Endothelial cell of umbilical vein (primary cell): ENCODE measurements at regions of chr2 and their contacts with region 1.

Region 1: DNA sequence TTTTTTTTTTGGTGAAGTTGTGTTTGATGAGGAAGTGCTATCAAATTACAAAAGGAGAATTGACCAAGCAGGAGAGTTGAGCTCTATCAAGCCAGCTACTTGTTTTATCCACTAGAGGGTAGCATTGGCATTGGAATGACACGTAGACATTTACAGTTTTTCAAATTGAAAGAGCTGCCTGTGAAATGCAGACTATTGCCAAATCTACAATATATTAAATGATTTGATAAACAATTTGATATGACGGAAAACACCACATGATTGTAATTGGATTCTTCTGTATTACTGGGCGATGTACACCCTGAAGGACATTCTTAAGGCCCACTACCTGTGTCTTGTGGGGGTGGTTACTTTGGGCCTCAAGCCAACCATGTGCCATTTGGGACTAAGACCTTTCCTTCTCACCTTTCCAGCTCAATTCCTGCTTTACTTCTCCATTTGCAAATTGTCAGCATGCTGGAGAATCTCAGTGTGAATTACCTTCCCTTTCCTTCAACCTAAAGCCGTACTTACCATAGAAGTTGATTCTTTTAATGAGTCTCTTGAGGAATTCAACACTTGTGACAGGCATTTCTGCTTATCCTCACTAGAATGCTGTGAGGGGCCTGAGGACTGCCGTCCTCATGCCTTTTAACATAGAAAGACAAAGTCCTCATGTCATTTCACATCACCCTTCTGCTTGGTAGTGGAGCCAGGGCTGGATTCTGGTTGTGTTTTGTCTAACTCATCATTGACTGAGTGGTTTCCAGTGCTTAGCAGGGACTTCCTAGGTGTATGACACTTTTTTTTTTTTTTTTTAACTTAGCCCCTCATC is 134.8 kb upstream of the THUMPD2 start:
- DNase-seq: peak; percentile 71
- H3K4me3 ChIP-seq: no peak overlapping the region
- H3K27ac ChIP-seq: no peak overlapping the region
- H3K4me1 ChIP-seq: no peaks in the 10 kb centered on the region
- H3K27me3 ChIP-seq: no peaks in the 10 kb centered on the region
- CTCF ChIP-seq: peak; percentile 42 to 67
- POLR2A ChIP-seq: no peak

Region 2: DNA sequence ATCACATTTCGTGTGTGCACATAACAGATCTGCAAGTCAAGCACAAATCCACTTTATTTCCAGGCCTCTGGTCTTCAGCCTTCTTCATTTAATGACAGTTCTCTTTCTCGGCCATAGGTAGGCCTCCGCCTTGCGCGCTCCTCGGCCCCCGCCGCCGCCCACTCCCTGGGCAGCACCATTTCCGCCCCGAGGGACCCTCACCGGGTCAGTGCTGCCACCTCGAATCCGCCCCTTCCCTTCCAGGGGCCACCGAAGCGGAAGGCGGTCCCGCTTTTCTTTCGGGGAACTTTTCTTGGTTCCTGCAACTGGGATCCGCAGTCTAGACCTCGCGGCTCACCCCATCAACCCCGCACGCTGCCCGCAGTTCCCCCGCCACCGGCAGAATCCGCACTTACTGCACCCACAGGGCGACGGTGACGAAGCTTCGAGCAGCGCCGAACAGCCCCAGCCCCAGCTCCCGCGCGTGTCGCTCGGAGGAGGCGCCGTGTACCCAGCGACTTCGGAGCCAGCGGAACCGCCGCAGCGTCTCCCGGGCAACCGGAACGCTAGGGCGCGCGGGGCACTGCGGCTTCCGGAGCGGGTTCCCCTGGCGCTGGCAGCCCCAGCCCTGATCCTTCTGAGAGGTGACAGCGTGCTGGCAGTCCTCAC is 670.3 kb before region 1 on chr2 and contains the start of gene CDKL4:
- CTCF ChIA-PET with region 1: no interaction called
- POLR2A ChIA-PET with region 1: no interaction called
- dilution Hi-C with region 1: no loop called
- intact Hi-C with region 1: no loop called
- DNase-seq: no peak
- H3K4me3 ChIP-seq: peak within 1 kb of the TSS in 2 of 3 experiments; percentile 10 to 27
- H3K27ac ChIP-seq: no peak within 1 kb of the TSS
- H3K4me1 ChIP-seq: peaks cover 5% of the 10 kb centered on the region
- H3K27me3 ChIP-seq: no peaks in the 10 kb centered on the region
- CTCF ChIP-seq: no peak
- POLR2A ChIP-seq: no peak
- total RNA-seq, gene CDKL4: 0.75 and 1.2 TPM in 2 replicates

Region 3: DNA sequence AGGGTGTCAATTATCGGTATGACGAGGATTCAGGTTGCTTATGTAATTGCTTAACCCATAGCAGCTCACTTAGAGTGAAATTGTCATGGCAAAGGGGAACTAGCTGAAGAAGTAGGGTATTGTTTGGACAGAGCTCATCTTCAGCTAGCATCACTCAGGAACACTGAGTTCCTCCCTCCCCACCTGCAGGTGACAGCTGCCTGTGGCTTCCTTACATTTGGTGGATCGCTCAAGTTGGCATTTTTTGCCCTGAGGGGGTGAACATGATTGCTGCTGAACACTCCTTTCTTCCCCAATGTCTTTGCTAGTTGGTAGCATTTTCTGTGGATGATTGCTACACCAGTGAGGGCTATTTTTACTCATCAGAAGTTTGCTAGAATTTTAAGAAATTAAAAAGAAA is 48.1 kb before region 1 on chr2:
- CTCF ChIA-PET with region 1: no interaction called
- POLR2A ChIA-PET with region 1: no interaction called
- dilution Hi-C with region 1: no loop called
- intact Hi-C with region 1: no loop called
- DNase-seq: no peak
- H3K4me3 ChIP-seq: no peak overlapping the region
- H3K27ac ChIP-seq: no peak overlapping the region
- H3K4me1 ChIP-seq: no peaks in the 10 kb centered on the region
- H3K27me3 ChIP-seq: no peaks in the 10 kb centered on the region
- CTCF ChIP-seq: no peak
- POLR2A ChIP-seq: no peak

Region 4: DNA sequence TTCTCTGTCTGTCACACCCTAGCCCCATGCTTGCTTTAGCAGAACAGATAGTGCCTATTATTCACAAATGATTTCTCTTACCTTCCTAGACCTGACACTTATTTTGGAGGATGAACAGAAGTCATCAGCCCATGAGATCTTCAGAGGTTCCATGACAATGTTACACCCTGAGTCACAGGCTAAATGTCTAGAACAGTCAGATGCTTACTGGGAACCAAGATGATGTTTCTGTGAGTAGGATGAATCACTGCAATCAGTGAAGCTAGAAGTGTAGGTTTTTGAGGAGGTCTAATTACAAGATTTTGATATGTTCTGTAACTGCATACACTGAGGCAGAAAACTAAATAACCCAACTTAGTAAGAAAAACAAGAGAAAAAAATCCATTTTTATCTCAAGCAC is 11.8 kb before region 1 on chr2:
- CTCF ChIA-PET with region 1: interaction called, 10 read pairs
- POLR2A ChIA-PET with region 1: no interaction called
- dilution Hi-C with region 1: no loop called
- intact Hi-C with region 1: no loop called
- DNase-seq: no peak
- H3K4me3 ChIP-seq: no peak overlapping the region
- H3K27ac ChIP-seq: no peak overlapping the region
- H3K4me1 ChIP-seq: peaks cover 4% of the 10 kb centered on the region
- H3K27me3 ChIP-seq: peaks cover 1 to 5% of the 10 kb centered on the region in 2 experiments
- CTCF ChIP-seq: no peak
- POLR2A ChIP-seq: no peak

Region 5: GRCh38 chr2:40049781-40050180 is 135.9 kb after region 1 on chr2:
- CTCF ChIA-PET with region 1: no interaction called
- POLR2A ChIA-PET with region 1: no interaction called
- dilution Hi-C with region 1: no loop called
- intact Hi-C with region 1: no loop called
- DNase-seq: no peak
- H3K4me3 ChIP-seq: no peak overlapping the region
- H3K27ac ChIP-seq: no peak overlapping the region
- H3K4me1 ChIP-seq: no peaks in the 10 kb centered on the region
- H3K27me3 ChIP-seq: peaks cover 2% of the 10 kb centered on the region in 2 experiments
- CTCF ChIP-seq: no peak
- POLR2A ChIP-seq: no peak

Region 6: GRCh38 chr2:40244675-40245074 is 330.8 kb after region 1 on chr2:
- CTCF ChIA-PET with region 1: interaction called, 44 read pairs
- POLR2A ChIA-PET with region 1: no interaction called
- dilution Hi-C with region 1: no loop called
- intact Hi-C with region 1: loop called (anchors 2 kb)
- DNase-seq: peak; percentile 71
- H3K4me3 ChIP-seq: no peak overlapping the region
- H3K27ac ChIP-seq: no peak overlapping the region
- H3K4me1 ChIP-seq: peaks cover 5% of the 10 kb centered on the region
- H3K27me3 ChIP-seq: no peaks in the 10 kb centered on the region
- CTCF ChIP-seq: peak; percentile 47 to 64
- POLR2A ChIP-seq: no peak

Region 7: DNA sequence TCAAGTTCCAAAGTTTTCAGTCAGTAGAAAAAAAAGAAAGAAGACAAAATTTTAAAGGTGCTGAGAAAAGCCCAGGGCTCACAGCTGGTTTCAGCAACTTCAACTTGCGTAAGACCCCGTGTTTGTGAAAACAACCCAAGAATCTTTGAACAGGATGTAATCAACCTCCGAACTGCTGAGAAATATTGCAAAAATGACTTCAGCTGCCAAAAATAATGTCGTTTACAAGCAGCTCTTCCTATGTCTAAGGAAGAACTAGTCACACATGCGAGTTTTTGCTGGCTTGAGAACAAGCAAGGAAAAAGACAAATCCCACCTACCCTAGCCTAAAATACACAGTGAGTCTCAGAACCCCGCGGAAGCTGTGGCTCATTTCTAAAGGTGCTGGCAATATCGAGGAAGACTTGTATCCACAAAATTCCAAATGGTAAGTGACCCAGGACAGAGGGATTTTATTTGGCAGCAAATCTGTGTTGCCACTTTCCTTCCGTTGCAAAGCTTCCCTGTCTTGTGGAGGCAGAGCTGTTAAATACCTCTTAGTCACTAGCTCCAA is 597.9 kb after region 1 on chr2:
- CTCF ChIA-PET with region 1: interaction called, 12 read pairs
- POLR2A ChIA-PET with region 1: no interaction called
- dilution Hi-C with region 1: no loop called
- intact Hi-C with region 1: no loop called
- DNase-seq: peak; percentile 87
- H3K4me3 ChIP-seq: peak overlapping the region in 1 of 3 experiments; percentile 34
- H3K27ac ChIP-seq: peak overlapping the region; percentile 68
- H3K4me1 ChIP-seq: peaks cover 16% of the 10 kb centered on the region
- H3K27me3 ChIP-seq: no peaks in the 10 kb centered on the region
- CTCF ChIP-seq: no peak
- POLR2A ChIP-seq: no peak

Region 8: DNA sequence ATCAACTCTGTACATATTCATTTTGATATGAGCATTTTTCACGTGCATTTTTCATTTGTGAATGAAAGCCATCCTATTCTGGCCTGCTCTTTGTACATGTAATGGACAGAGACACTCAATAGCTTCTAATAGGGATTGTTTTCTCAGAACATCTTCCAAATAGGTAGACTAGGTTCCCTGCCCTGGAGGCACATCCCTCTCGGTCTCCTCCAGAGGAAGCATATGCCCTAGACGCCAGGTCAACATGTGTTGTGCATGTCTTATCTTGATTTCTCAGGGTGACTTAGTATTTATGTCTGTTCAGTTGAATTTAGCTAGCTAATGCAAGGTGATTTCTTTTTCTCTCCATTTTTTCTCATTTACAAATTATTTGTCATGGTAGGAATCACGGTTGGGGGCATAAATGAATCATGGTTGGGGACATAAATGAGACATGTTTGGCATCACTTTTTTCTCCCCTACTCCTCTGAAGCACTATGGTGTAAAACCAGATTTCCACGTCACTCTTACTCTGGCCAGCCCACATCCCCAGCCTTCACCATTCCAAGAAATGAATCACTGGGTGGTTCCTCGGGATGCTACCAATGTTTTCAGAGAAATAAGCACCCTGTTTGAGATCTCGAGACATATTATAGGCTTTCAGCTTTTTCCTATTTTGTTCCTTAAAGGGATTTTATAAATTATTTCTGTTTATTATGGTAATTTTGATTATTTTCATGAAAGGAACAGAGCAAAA is 692.8 kb after region 1 on chr2:
- CTCF ChIA-PET with region 1: no interaction called
- POLR2A ChIA-PET with region 1: no interaction called
- dilution Hi-C with region 1: no loop called
- intact Hi-C with region 1: no loop called
- DNase-seq: no peak
- H3K4me3 ChIP-seq: no peak overlapping the region
- H3K27ac ChIP-seq: no peak overlapping the region
- H3K4me1 ChIP-seq: no peaks in the 10 kb centered on the region
- H3K27me3 ChIP-seq: no peaks in the 10 kb centered on the region
- CTCF ChIP-seq: no peak
- POLR2A ChIP-seq: no peak

Region 9: DNA sequence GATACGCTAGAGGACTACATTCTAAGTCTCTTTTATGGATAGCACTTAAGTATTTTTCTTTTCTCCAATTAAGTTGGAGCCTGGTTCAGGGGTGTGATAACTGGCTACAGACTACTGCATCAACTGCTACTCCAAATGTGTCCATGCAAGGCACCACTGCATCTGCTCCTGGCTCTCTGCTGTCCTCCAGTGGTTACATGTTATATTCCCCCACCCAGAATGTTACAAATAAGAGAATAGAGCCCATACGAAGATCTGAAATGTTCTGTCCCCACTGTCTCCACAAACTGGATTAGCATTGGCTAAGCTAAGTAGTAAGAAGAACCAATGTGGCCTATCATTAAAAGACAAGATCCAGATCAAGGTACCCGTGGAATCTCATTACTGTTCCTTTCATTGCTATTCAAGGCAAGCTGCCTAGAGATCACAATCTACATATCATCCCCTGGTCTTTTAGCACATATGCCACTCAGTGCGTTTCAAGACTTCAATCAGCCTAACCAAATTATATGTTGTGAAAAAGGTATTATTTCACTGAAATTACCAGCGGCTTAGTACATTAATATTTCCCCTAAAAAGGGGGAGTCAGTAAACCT is 846.3 kb after region 1 on chr2:
- CTCF ChIA-PET with region 1: interaction called, 36 read pairs
- POLR2A ChIA-PET with region 1: no interaction called
- dilution Hi-C with region 1: no loop called
- intact Hi-C with region 1: loop called (anchors 1 kb)
- DNase-seq: peak; percentile 45
- H3K4me3 ChIP-seq: no peak overlapping the region
- H3K27ac ChIP-seq: no peak overlapping the region
- H3K4me1 ChIP-seq: no peaks in the 10 kb centered on the region
- H3K27me3 ChIP-seq: no peaks in the 10 kb centered on the region
- CTCF ChIP-seq: peak; percentile 48 to 49
- POLR2A ChIP-seq: no peak

Region 10: DNA sequence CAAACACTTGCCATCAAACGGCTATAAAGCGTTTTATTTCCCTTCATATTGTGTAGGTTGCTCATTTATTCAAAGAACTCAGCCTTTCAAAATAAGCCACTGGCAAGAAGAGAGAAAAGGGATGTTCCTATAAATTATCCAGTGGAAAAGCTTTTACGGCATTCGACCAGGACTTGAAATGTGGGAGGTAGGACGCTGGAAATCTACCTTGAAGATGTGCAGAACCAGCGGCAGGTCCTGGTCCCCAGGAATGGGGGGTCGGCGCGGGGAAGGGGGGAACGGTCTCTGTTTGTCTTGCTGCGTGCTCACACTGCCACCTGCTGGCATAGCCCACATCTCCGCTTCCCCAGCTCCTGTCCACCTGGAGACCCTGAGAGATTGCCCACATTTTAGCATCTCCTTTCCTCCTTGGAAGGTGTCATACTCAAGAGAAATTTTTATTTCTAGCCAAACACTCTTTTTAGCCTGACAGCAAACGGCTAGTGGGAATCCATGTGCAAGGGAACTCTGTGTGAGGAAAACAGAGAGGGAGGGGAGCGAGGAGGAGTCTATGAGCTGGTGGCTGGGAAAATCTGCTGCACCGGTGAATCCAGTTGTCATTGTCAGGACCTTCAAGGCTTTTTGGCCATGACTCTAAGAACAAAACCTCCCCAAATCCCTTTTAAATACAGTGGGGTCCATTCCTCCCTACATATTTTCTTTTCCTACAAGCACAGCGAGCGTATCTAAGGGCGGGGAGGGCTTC is 1785.0 kb after region 1 on chr2:
- CTCF ChIA-PET with region 1: interaction called, 114 read pairs
- POLR2A ChIA-PET with region 1: no interaction called
- dilution Hi-C with region 1: no loop called
- intact Hi-C with region 1: loop called (anchors 1 kb)
- DNase-seq: peak; percentile 21
- H3K4me3 ChIP-seq: no peak overlapping the region
- H3K27ac ChIP-seq: no peak overlapping the region
- H3K4me1 ChIP-seq: no peaks in the 10 kb centered on the region
- H3K27me3 ChIP-seq: no peaks in the 10 kb centered on the region
- CTCF ChIP-seq: peak; percentile 55 to 84
- POLR2A ChIP-seq: no peak